ENCODE measurements at regions of chr2 and their contacts with region 1.

Region 1: DNA sequence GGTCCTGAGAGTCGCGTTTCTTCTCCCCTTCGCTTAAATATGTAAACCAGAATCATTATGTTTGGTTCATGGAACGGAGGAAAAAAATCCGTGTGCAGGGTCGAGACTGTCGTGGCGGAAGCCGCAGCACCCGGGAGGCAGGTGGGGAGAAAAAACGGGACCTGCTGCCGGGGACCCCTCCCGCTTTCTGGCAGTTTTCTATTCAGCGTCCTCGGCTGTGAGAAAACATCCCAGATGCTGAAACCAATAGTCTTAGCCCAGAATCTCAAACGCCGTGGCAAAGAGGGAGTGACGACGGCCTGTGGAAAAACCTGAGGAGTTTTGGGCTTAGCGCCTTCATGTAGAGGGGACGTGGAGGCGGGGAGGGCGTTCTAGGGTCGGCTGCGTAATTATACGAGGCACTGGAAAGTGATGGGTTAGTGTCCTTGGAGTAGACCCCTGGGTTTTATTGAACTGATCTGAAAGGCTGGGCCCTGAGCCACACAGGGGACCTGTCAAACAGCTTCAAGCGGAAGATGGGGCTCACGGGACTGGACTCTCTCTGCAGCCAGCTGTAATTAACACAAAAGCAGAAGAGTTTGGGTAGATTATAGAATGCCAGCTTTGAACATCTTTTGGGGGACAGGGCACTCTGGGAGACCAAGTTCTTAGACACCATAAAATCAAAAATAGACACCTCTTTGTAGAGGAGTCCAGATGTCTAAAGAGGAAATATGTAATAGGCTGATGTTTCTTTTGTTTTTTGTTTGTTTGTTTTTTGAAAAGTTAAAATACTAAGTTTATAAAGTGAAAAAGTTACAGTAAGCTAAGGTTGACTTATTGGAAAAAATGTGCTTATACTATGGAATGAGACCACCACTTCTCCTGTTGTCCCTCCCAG is 834 bp upstream of the BUB1 start:
- DNase-seq: no peak
- H3K4me3 ChIP-seq: peak overlapping the region; percentile 82
- H3K27ac ChIP-seq: peak overlapping the region; percentile 84
- H3K27me3 ChIP-seq: peaks cover 25% of the 10 kb centered on the region
- CTCF ChIP-seq: no peak

Region 2: GRCh38 chr2:110755491-110756078 is 76.9 kb after region 1 on chr2:
- CTCF ChIA-PET with region 1: interaction called, 14 read pairs
- POLR2A ChIA-PET with region 1: no interaction called
- DNase-seq: no peak
- H3K4me3 ChIP-seq: no peak overlapping the region
- H3K27ac ChIP-seq: no peak overlapping the region
- H3K27me3 ChIP-seq: peaks cover 7% of the 10 kb centered on the region
- CTCF ChIP-seq: peak; percentile 60